ENCODE measurements at regions of chrX and their contacts with region 1.

Region 1: DNA sequence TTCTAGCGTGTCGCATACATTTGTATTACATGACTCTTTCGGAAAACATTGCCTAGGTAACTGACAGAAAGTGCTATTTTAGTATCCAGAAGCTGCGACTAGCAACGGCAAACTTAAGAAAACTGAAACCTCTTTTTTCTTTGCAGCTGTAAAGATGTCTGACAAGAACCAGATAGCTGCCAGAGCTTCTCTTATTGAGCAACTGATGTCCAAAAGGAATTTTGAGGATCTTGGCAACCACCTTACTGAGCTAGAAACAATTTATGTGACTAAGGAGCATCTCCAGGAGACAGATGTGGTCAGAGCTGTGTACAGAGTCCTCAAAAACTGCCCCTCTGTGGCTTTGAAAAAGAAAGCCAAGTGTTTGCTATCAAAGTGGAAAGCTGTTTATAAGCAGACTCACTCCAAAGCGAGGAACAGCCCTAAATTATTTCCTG is 9.4 kb downstream of the TCEANC start:
- DNase-seq: no peak
- H3K4me3 ChIP-seq: peak overlapping the region in 2 of 4 donors; percentile 6 to 20
- H3K27ac ChIP-seq: peak overlapping the region; percentile 61 to 81 (median 72)
- H3K4me1 ChIP-seq: peaks cover 0 to 10% (median 0%) of the 10 kb centered on the region in 4 donors
- H3K27me3 ChIP-seq: no peaks in the 10 kb centered on the region
- CTCF ChIP-seq: no peak
- EP300 ChIP-seq: no peak
- POLR2A ChIP-seq: no peak

Region 2: DNA sequence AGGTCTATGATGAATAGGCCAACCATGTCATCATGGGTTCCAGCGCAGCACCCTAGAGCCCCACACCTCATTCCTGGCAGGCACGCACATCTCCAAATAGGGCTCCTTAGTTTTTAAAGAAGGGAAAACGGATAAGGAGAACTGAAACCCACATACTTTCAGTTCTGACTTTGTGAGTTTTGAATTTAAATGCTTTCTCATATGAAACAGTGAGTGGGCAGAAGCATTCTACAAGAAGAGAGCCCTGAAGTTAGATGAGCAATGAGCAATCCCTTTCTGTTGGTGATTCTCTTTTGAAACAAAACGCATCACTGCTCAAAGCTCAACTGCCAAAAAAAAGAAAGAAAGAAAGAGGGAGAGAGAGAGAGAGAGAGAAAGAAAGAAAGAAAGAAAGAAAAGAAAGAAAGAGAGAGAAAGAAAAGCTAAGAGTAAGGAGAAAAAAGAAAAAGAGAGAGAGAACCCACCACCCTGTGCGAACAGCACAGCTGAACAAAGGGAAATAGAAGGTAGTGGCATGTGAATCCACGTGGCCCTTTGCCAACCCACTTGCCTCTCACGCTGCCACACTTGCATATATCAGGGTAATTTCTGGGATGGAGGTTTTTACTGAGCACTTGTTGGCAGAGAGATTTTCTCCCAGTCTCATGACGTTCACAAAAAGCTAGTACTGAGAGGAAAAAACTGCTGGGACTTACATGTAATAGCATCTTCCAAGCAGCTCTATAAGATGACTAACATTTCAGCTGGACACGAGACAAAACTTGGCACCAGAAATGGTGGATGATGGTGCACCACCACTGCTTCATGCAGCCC is 656.5 kb before region 1 on chrX:
- in situ Hi-C with region 1: no loop called
- intact Hi-C with region 1: no loop called
- DNase-seq: no peak
- H3K4me3 ChIP-seq: no peak overlapping the region
- H3K27ac ChIP-seq: peak overlapping the region; percentile 16 to 35 (median 25)
- H3K4me1 ChIP-seq: peaks cover 0 to 38% (median 17%) of the 10 kb centered on the region in 4 donors
- H3K27me3 ChIP-seq: no peaks in the 10 kb centered on the region
- CTCF ChIP-seq: no peak
- EP300 ChIP-seq: no peak
- POLR2A ChIP-seq: no peak

Region 3: GRCh38 chrX:13620207-13620606 is 42.2 kb before region 1 on chrX:
- in situ Hi-C with region 1: no loop called
- intact Hi-C with region 1: no loop called
- DNase-seq: no peak
- H3K4me3 ChIP-seq: no peak overlapping the region
- H3K27ac ChIP-seq: no peak overlapping the region
- H3K4me1 ChIP-seq: no peaks in the 10 kb centered on the region
- H3K27me3 ChIP-seq: no peaks in the 10 kb centered on the region
- CTCF ChIP-seq: no peak
- EP300 ChIP-seq: no peak
- POLR2A ChIP-seq: no peak

Region 4: GRCh38 chrX:13742397-13743176 is 80.2 kb after region 1 on chrX:
- in situ Hi-C with region 1: loop called in 3 of 4 experiments (anchors 5 to 10 kb)
- intact Hi-C with region 1: loop called (anchors 10 kb)
- DNase-seq: peak; percentile 15
- H3K4me3 ChIP-seq: no peak overlapping the region
- H3K27ac ChIP-seq: peak overlapping the region; percentile 30 to 58 (median 56)
- H3K4me1 ChIP-seq: no peaks in the 10 kb centered on the region
- H3K27me3 ChIP-seq: no peaks in the 10 kb centered on the region
- CTCF ChIP-seq: no peak
- EP300 ChIP-seq: no peak
- POLR2A ChIP-seq: no peak

Region 5: DNA sequence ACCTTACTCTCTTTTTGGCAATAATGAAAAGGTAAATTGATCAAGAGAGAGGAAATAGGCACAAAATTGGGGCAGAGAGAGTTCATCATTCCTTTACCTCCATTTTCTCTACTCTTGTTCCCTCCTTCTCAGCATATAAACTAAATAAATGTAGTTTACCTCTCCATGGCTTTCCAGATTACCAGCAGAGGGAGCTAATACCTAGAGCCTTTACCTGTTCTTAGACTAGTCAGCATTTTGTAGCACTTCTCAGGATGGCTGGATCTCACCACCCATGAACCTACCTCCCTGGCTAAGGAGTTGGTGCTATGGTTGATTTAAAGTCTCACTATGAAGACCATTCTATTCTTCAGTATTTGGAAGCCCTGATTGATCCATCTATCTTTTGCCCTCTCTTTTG is 87.8 kb after region 1 on chrX:
- in situ Hi-C with region 1: loop called in 1 of 4 experiments (anchors 5 kb)
- intact Hi-C with region 1: no loop called
- DNase-seq: no peak
- H3K4me3 ChIP-seq: no peak overlapping the region
- H3K27ac ChIP-seq: no peak overlapping the region
- H3K4me1 ChIP-seq: no peaks in the 10 kb centered on the region
- H3K27me3 ChIP-seq: no peaks in the 10 kb centered on the region
- CTCF ChIP-seq: peak; percentile 37 to 46 (median 43)
- EP300 ChIP-seq: no peak
- POLR2A ChIP-seq: no peak

Region 6: DNA sequence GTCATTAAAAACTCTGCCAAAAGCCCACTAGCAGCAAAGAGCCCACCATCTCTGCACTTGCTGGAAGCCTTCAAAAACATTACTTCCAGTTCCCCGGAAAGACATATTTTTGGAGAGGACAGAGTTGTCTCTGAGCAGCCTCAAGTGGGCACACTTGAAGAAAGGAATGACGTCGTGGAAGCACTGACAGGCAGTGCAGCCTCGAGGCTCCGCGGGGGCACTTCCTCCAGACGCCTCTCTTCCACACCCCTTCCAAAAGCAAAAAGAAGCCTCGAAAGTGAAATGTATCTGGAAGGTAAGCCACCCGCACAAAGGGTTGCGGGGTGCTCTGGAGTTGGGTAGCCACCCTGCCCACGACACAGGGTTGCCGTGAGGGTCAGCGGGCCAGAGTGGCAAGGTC is 98.1 kb after region 1 on chrX:
- in situ Hi-C with region 1: no loop called
- intact Hi-C with region 1: no loop called
- DNase-seq: no peak
- H3K4me3 ChIP-seq: no peak overlapping the region
- H3K27ac ChIP-seq: no peak overlapping the region
- H3K4me1 ChIP-seq: peaks cover 0 to 3% (median 1%) of the 10 kb centered on the region in 4 donors
- H3K27me3 ChIP-seq: no peaks in the 10 kb centered on the region
- CTCF ChIP-seq: no peak
- EP300 ChIP-seq: no peak
- POLR2A ChIP-seq: no peak

Measured in transverse colon (tissue), 4 donors.